Body of pancreas (tissue), 4 donors: ENCODE measurements at regions of chr5 and their contacts with region 1.

Region 1: GRCh38 chr5:1099926-1100663 is 11.8 kb downstream of the SLC12A7 start:
- DNase-seq: no peak
- ATAC-seq: no peak
- H3K4me3 ChIP-seq: no peak overlapping the region
- H3K27ac ChIP-seq: no peak overlapping the region
- H3K4me1 ChIP-seq: peaks cover 39% of the 10 kb centered on the region
- H3K27me3 ChIP-seq: no peaks in the 10 kb centered on the region
- CTCF ChIP-seq: no peak
- POLR2A ChIP-seq: no peak

Region 2: DNA sequence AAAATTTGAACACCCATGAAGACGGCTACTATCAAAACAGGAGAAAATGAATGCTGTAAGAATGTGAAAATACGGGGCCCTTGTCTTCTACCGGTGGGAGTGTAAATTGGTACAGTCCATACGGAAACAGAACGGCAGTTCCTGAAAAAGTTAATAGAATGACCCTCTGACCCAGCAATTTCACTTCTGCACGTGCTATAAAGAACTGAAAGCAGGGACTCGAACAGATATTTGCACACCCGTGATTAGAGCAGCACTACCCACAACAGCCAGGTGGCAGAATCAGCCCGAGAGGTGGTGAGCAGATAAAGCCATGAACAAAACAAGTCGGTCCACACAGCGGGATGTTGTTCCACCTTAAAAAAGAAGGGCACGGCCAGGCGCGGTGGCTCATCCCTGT is 34.4 kb after region 1 on chr5:
- intact Hi-C with region 1: loop called (anchors 5 kb)
- DNase-seq: peak; percentile 35 to 64 (median 52)
- ATAC-seq: no peak
- H3K4me3 ChIP-seq: no peak overlapping the region
- H3K27ac ChIP-seq: no peak overlapping the region
- H3K4me1 ChIP-seq: peaks cover 35% of the 10 kb centered on the region
- H3K27me3 ChIP-seq: no peaks in the 10 kb centered on the region
- CTCF ChIP-seq: peak; percentile 12 to 60 (median 41)
- POLR2A ChIP-seq: no peak

Region 3: GRCh38 chr5:1255081-1255561 is 155.0 kb after region 1 on chr5:
- intact Hi-C with region 1: no loop called
- DNase-seq: no peak
- ATAC-seq: no peak
- H3K4me3 ChIP-seq: no peak overlapping the region
- H3K27ac ChIP-seq: no peak overlapping the region
- H3K4me1 ChIP-seq: no peaks in the 10 kb centered on the region
- H3K27me3 ChIP-seq: no peaks in the 10 kb centered on the region
- CTCF ChIP-seq: no peak
- POLR2A ChIP-seq: no peak